ENCODE measurements at regions of chr16 and their contacts with region 1.

Region 1: GRCh38 chr16:68823401-68824135 is 19.8 kb upstream of the TANGO6 start:
- DNase-seq: peak; percentile 11
- H3K4me3 ChIP-seq: no peak overlapping the region
- H3K27ac ChIP-seq: no peak overlapping the region
- H3K4me1 ChIP-seq: no peaks in the 10 kb centered on the region
- H3K27me3 ChIP-seq: no peaks in the 10 kb centered on the region
- CTCF ChIP-seq: no peak

Region 2: DNA sequence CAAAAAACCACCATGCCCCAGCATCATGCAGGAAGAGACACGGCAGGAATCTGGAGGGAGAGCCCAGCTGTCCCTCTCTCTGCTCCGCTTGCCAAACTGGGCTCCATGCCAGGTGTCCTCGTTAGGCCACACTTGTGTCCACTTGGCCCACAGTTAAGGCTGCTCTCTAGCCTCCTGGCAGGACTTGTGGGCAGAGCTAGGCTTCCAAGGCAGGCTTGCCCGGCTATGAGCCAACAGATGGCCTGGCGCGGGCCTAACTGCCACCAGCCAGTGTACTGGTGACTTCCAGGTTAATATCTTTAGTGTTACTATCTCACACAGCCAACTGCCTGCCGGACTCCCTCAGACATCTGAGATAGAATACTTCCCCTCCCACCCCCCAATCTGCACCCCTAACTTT is 1353.2 kb before region 1 on chr16:
- CTCF ChIA-PET with region 1: no interaction called
- POLR2A ChIA-PET with region 1: no interaction called
- intact Hi-C with region 1: no loop called
- DNase-seq: no peak
- H3K4me3 ChIP-seq: no peak overlapping the region
- H3K27ac ChIP-seq: no peak overlapping the region
- H3K4me1 ChIP-seq: peaks cover 3% of the 10 kb centered on the region
- H3K27me3 ChIP-seq: no peaks in the 10 kb centered on the region
- CTCF ChIP-seq: no peak

Region 3: DNA sequence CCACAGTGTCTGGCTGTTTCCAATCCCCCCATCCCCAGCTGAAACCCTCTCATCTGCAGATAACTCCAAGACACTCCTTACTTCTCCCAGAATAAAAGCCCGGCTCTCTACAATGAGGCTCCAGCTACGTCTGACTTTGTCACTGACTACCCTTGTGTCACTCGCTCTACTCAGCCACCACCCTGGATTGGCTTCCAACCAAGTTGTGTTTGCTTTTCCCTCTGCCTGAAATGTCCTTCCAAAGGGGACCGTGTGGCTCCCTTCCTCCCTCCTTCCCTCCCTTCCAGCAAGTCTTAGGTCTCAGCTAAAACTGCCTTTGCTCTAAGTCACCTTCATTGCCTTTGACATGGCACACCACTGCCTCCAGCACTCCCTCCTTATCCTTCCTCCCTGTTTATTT is 43.7 kb before region 1 on chr16:
- CTCF ChIA-PET with region 1: no interaction called
- POLR2A ChIA-PET with region 1: interaction called, 15 read pairs
- intact Hi-C with region 1: no loop called
- DNase-seq: no peak
- H3K4me3 ChIP-seq: no peak overlapping the region
- H3K27ac ChIP-seq: no peak overlapping the region
- H3K4me1 ChIP-seq: no peaks in the 10 kb centered on the region
- H3K27me3 ChIP-seq: no peaks in the 10 kb centered on the region
- CTCF ChIP-seq: no peak

Region 4: GRCh38 chr16:68811503-68811902 is 12.1 kb before region 1 on chr16:
- CTCF ChIA-PET with region 1: no interaction called
- POLR2A ChIA-PET with region 1: no interaction called
- intact Hi-C with region 1: no loop called
- DNase-seq: no peak
- H3K4me3 ChIP-seq: no peak overlapping the region
- H3K27ac ChIP-seq: no peak overlapping the region
- H3K4me1 ChIP-seq: no peaks in the 10 kb centered on the region
- H3K27me3 ChIP-seq: no peaks in the 10 kb centered on the region
- CTCF ChIP-seq: no peak

Measured in A673 (cell line).